PC-3 (cell line): ENCODE measurements at regions of chr2 and their contacts with region 1.

Region 1: GRCh38 chr2:112958428-112959108 is 19.2 kb upstream of the IL36G start:
- DNase-seq: peak; percentile 69
- ATAC-seq: peak; percentile 94
- H3K4me3 ChIP-seq: peak overlapping the region; percentile 33; the same call in 1 of the 2 replicates
- H3K27ac ChIP-seq: peak overlapping the region; percentile 59
- H3K4me1 ChIP-seq: peaks cover 12% of the 10 kb centered on the region
- H3K27me3 ChIP-seq: no peaks in the 10 kb centered on the region
- CTCF ChIP-seq: peak; percentile 87

Region 2: DNA sequence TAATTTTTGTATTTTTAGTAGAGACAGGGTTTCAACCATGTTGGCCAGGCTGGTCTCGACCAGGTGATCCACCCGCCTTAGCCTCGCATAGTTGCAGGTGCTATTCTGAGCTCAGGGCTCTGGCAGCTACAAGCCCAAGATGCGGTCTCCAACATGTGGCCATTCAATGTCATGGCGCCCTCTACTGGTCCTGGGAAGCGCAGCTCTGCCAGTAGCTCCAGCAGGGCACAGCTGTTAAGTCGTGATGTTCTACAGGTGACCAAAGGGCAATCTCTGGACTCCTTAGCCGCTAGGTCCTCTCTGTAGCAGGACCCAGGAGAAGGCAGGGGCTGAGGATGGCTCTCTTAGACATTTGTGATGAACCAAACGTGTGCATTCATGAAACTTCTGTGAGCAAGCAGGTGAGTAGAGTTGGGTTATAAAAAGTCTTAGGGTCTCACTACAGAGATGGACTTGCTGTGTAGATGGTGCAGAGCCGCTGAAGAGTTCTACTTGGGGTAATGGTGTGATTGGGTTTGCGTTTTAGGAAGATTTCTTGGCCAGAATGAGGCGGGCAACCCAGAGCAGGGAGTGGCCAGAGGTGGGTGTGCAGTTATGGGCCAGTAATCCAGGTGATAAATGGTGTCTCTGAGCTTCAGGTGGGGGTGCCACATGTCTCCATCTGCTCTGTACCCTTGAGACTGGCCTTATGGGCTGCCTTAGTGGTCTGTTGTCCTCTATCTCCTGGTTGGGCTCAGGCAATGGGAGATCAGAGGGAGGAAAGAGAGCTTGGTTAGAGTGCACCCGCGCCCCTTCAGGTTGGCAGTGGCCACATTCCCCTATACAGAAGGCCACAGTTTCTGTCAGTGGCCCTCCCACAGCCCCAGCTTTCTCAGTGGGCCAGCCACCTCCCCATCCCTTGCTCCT is 16.6 kb before region 1 on chr2:
- CTCF ChIA-PET with region 1: interaction called, 12 read pairs
- POLR2A ChIA-PET with region 1: no interaction called
- intact Hi-C with region 1: no loop called
- DNase-seq: peak; percentile 87
- ATAC-seq: peak; percentile 92
- H3K4me3 ChIP-seq: no peak overlapping the region
- H3K27ac ChIP-seq: peak overlapping the region; percentile 14; the same call in 1 of the 2 replicates
- H3K4me1 ChIP-seq: peaks cover 22% of the 10 kb centered on the region
- H3K27me3 ChIP-seq: no peaks in the 10 kb centered on the region
- CTCF ChIP-seq: peak; percentile 92

Region 3: GRCh38 chr2:113068718-113069435 is 110.3 kb after region 1 on chr2:
- CTCF ChIA-PET with region 1: no interaction called
- POLR2A ChIA-PET with region 1: no interaction called
- intact Hi-C with region 1: loop called (anchors 2 kb)
- DNase-seq: peak; percentile 93
- ATAC-seq: peak; percentile 82
- H3K4me3 ChIP-seq: 0 out of 2 replicates have a peak overlapping the region, but pooled peaks have one; percentile 7
- H3K27ac ChIP-seq: peak overlapping the region; percentile 95
- H3K4me1 ChIP-seq: peaks cover 36% of the 10 kb centered on the region
- H3K27me3 ChIP-seq: no peaks in the 10 kb centered on the region
- CTCF ChIP-seq: no peak

Region 4: DNA sequence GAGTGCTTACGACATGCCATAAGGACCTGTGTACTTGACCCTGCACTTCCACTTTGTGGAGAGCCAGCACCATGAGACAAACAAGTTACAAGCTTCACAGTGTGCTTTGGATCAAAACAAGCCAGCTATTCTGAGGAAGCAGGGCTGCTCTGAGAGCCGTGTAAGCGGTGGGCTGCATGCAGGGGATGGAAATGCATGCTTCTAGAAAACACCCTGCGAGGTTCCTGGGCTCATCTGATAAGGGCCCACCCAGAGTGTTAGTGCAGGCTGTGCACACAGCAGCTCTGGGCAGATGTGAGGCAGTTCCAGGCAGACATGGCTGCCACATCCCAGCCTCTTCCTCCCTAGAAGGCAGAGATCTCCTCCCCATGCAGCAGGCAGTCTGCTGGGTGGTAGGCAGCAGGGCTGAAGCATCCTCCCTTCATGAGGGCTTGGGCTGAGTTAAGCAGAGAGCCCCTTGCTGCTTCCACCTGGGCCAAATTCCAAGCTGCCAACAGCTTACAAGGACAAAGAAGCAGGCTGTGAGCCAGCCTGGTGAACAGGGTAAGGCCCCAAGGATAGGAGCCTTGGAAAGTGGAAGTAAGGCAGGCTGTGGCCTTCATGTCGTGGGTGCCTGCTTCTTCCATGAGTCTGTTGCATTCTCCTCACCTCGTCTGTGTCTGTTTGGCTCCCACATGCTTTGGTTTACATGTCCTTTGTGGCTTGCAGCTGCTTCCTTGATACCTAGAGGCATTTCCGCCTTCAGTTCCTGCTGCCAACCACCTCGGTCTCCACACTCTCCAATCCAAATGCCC is 222.9 kb after region 1 on chr2:
- CTCF ChIA-PET with region 1: no interaction called
- POLR2A ChIA-PET with region 1: no interaction called
- intact Hi-C with region 1: no loop called
- DNase-seq: no peak
- ATAC-seq: no peak
- H3K4me3 ChIP-seq: no peak overlapping the region
- H3K27ac ChIP-seq: no peak overlapping the region
- H3K4me1 ChIP-seq: no peaks in the 10 kb centered on the region
- H3K27me3 ChIP-seq: no peaks in the 10 kb centered on the region
- CTCF ChIP-seq: no peak